Right ventricle myocardium superior (tissue), 1 donor: ENCODE measurements at regions of chr5 and their contacts with region 1.

Region 1: DNA sequence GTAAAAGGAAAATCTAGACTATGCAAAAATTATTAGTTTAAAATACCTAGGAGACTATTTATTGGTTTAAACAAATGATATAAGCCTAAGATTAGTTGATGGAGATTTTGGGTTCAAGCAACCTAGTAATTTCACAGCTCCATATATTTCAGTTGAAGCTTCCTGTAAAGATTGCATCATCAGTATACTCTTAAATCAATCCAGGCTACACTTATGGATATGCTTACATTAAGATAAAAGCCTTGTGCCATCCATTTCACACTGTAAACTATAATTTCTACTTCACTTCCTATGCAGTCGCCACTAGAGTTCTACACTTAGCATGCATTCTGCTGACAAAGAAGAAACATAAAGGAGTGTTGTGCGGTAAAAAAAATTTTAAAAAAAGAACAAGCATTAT is 7.3 kb upstream of the LIX1 start:
- DNase-seq: no peak
- ATAC-seq: no peak

Region 2: GRCh38 chr5:97046270-97046982 is 103.3 kb before region 1 on chr5:
- intact Hi-C with region 1: loop called (anchors 5 kb)
- DNase-seq: no peak
- ATAC-seq: no peak

Region 3: GRCh38 chr5:97111616-97112015 is 38.1 kb before region 1 on chr5:
- intact Hi-C with region 1: no loop called
- DNase-seq: no peak
- ATAC-seq: no peak